AG04450 (cell line): ENCODE measurements at regions of chr19 and their contacts with region 1.

Region 1: GRCh38 chr19:47436712-47437401 is 17.5 kb upstream of the MEIS3 start:
- DNase-seq: no peak
- H3K4me3 ChIP-seq: no peak overlapping the region
- H3K27ac ChIP-seq: no peak overlapping the region
- H3K27me3 ChIP-seq: peaks cover 13% of the 10 kb centered on the region
- CTCF ChIP-seq: peak; percentile 86

Region 2: DNA sequence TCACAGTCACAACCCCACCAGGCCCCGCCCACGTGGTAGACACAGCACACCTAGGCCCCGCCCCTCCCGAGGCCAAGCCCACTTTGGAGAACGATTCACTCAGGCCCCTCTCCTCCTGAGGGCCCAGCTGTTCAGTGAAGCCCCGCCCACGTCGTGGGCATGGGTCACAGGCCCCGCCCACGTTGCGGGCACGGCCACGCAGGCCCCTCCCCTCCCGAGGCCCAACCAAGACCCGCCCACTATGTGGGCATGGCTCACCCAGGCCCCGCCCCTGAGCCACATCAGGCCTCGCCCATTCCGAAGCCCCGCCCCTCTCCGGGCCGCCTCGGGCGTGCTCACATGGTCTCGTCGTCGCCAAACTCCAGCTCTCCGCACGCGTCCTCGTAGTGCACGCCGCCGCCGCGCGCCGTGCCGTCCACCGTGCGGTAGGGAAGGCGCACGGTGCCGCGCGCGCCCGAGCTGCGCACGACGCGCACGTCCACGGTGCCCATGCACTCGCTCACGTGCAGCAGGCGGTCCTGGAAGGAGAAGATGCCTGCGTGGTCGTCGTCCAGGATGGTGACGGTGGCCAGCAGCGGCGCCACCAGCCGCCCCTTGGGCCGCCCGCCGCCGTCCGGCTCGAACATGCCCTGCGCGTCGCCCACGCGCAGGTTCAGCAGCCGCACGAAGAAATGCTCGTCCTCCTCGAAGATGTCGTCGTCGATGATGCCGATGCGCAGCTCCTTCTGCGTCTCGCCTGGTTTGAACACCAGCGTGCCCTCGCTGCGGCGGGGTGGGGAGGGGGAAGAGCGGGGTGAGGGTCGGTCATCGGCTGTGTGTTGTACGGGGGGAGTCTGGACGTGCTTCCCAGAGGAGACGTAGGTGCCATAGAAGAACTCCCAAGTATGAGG is 10.9 kb after region 1 on chr19:
- CTCF ChIA-PET with region 1: interaction called, 11 read pairs
- POLR2A ChIA-PET with region 1: no interaction called
- DNase-seq: no peak
- H3K4me3 ChIP-seq: no peak overlapping the region
- H3K27ac ChIP-seq: no peak overlapping the region
- H3K27me3 ChIP-seq: peaks cover 60% of the 10 kb centered on the region
- CTCF ChIP-seq: no peak

Region 3: DNA sequence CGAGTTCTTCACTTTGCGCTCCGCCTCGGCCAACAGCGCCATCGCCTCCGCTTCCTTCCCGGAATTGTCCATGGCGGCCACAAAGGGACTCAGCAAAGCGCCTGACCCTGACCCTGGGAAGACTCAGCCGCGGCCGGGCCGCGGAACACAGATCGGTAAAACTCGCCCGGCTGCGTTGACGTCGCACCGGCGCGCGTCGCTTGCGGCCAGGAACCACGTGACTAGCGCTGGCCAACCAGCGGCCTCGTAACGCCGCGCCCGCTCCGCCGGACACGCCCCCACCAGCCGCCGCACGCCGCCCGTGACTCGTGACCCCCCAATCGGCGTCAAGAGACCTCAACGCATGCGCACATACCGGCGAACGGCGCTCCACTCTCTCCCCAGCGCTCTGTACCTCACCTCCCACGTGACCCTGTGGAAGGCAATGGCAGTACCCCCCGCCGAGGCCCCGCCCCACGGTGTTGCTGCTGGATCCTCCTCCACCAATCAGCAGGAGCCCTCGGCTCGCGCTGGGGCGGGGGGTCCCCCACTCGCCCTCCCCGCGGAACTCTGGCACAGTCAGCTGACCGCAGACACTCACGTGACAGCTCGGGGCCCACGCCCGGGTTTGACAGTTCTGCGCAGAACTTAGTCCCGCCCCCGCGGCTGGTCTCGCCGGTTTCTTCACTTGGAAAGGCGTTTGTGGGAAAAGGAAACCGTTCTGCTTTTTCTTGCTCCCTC is 78.2 kb after region 1 on chr19 and contains the start of gene NAPA:
- CTCF ChIA-PET with region 1: interaction called, 17 read pairs
- POLR2A ChIA-PET with region 1: no interaction called
- DNase-seq: peak; percentile 100
- H3K4me3 ChIP-seq: peak within 1 kb of the TSS; percentile 98
- H3K27ac ChIP-seq: peak within 1 kb of the TSS; percentile 96
- H3K27me3 ChIP-seq: peaks cover 6% of the 10 kb centered on the region
- CTCF ChIP-seq: no peak
- polyA plus RNA-seq, gene NAPA: 84.1 and 102 TPM in 2 replicates

Region 4: GRCh38 chr19:47697863-47698609 is 261.2 kb after region 1 on chr19:
- CTCF ChIA-PET with region 1: interaction called, 212 read pairs
- POLR2A ChIA-PET with region 1: no interaction called
- DNase-seq: peak; percentile 53
- H3K4me3 ChIP-seq: no peak overlapping the region
- H3K27ac ChIP-seq: peak overlapping the region; percentile 11
- H3K27me3 ChIP-seq: no peaks in the 10 kb centered on the region
- CTCF ChIP-seq: peak; percentile 100

Region 5: DNA sequence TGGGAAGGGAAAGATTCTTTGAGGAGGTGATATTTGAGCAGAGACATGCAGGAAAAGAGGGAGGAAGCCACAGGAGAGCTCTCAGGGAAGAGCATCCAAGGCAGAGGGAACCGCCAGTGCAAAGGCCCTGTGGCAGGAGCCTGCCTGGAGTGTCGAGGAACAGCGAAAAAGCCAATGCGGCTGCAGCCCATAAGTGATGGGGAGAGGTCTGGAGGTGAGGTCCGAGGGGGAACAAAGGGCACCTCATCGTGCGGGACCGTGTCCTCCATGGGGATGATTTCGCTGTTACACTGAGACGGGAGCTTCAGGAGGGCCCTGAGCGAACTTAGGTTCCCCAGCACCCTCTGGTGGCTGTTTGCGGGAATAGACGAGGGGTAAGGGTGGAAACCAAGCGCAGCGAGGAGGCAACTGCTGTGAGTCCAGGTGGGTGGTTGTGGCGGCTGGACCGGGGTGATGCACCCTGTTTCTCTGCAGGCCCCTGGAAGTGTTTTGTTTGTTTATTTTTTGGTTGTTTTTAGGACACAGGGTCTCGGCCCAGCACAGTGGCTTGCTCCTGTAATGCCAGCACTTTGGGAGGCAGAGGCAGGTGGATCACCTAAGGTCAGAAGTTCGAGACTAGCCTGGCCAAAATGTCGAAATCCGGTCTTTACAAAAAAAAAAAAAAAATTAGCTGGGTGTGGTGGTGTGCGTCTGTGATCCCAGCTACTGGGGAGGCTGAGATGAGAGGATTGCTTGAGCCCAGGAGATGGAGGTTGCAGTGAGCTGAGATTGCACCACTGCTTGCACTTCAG is 270.5 kb after region 1 on chr19:
- CTCF ChIA-PET with region 1: interaction called, 212 read pairs
- POLR2A ChIA-PET with region 1: interaction called, 3 read pairs
- DNase-seq: no peak
- H3K4me3 ChIP-seq: no peak overlapping the region
- H3K27ac ChIP-seq: no peak overlapping the region
- H3K27me3 ChIP-seq: no peaks in the 10 kb centered on the region
- CTCF ChIP-seq: peak; percentile 94

Region 6: DNA sequence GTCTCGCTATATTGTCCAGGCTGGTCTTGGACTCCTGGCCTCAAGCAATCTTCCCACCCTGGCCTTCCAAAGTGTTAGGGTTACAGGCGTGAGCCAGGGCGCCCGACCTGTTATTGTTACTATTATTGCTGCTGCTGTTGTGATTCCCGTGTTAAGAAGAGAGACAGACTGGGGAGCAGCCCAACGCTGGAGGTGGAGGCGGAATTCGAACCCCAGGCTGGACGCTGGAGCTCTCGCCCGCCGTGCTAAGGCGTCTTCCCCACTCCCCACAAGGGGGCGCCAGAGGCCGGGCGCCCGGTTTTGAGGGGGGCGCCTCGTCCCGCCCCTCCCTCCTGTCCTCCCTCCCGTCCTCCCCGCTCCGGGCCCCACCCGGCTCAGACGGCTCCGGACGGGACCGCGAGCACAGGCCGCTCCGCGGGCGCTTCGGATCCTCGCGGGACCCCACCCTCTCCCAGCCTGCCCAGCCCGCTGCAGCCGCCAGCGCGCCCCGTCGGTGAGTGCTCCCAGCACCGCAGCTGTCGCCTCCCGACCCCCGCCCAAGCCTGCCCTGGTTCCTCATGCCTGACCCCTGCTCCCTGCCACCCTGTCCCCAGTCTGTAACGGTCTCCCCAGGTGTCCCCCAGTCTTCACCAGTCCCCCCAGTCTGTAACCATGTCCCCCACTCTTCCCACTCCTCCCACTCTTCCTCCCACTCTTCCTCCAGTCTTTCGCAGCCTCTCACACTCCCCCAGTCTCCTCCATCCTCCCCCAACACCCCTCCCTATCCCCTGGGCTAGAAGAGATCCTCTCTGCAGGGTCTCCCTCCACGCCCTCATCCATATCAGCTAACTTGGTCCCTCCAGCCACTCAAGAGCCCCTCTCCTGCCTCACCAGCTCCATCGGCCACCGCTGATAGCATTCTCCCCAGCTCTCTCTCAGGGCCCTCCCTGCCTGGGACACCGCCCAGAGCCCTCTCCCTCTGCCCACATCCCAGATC is 276.5 kb after region 1 on chr19 and contains the start of gene EHD2:
- CTCF ChIA-PET with region 1: interaction called, 212 read pairs
- POLR2A ChIA-PET with region 1: interaction called, 10 read pairs
- DNase-seq: peak; percentile 48
- H3K4me3 ChIP-seq: peak within 1 kb of the TSS; percentile 93
- H3K27ac ChIP-seq: peak within 1 kb of the TSS; percentile 52
- H3K27me3 ChIP-seq: no peaks in the 10 kb centered on the region
- CTCF ChIP-seq: peak; percentile 92
- polyA plus RNA-seq, gene EHD2: 84.0 and 126 TPM in 2 replicates